ENCODE measurements at regions of chr1 and their contacts with region 1.

Region 1: GRCh38 chr1:31886866-31887265 is 51.3 kb downstream of the PTP4A2 start:
- DNase-seq: peak; percentile 28 to 47 (median 33)
- H3K4me3 ChIP-seq: no peak overlapping the region
- H3K4me3 Mint-ChIP-seq: no peak overlapping the region
- H3K27ac ChIP-seq: no peak overlapping the region
- H3K27ac Mint-ChIP-seq: peak overlapping the region in 4 of 7 donors; percentile 9 to 58 (median 25)
- H3K4me1 ChIP-seq: peaks cover 43 to 47% of the 10 kb centered on the region in 2 donors
- H3K4me1 Mint-ChIP-seq: peaks cover 36% of the 10 kb centered on the region
- H3K27me3 ChIP-seq: no peaks in the 10 kb centered on the region
- H3K27me3 Mint-ChIP-seq: peaks cover 0 to 2% (median 0%) of the 10 kb centered on the region in 3 donors
- CTCF ChIP-seq: no peak

Region 2: GRCh38 chr1:31831397-31832378 is 55.2 kb before region 1 on chr1:
- intact Hi-C with region 1: no loop called
- DNase-seq: no peak
- H3K4me3 ChIP-seq: no peak overlapping the region
- H3K4me3 Mint-ChIP-seq: no peak overlapping the region
- H3K27ac ChIP-seq: no peak overlapping the region
- H3K27ac Mint-ChIP-seq: no peak overlapping the region
- H3K4me1 ChIP-seq: peaks cover 13 to 19% of the 10 kb centered on the region in 2 donors
- H3K4me1 Mint-ChIP-seq: peaks cover 21% of the 10 kb centered on the region
- H3K27me3 ChIP-seq: no peaks in the 10 kb centered on the region
- H3K27me3 Mint-ChIP-seq: peaks cover 6 to 11% (median 8%) of the 10 kb centered on the region in 3 donors
- CTCF ChIP-seq: no peak

Region 3: DNA sequence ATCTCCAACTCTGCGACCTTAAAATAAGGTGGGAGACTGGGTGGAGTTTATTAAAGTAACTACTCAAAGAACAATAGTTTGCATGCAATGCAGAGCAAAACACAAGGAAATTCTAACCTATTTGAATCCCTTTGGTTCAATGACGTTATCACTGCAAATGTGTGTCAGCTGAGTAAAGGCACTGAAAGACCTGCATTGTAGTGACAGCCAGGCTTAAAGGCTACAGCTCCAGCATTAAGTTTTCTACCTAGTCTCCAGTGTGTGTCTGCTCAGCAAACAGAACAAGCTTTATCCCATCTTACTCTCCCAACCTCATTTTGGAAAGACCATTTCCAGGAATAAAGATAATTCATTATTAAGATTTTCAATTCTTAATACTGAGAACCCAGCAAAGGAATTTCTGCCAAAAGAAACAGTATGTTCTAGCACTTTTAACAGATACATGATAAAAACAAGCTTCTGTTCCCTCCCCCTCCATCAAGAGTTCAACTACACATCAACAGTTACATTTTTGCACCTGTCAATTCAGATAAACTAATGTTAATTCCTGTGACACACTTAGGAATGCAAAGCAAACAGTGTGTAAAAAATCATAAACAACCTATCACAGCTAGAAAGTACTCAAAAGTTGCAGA is 37.2 kb after region 1 on chr1:
- intact Hi-C with region 1: loop called in 1 of 2 experiments (anchors 5 kb)
- DNase-seq: no peak
- H3K4me3 ChIP-seq: no peak overlapping the region
- H3K4me3 Mint-ChIP-seq: no peak overlapping the region
- H3K27ac ChIP-seq: peak overlapping the region in 1 of 2 donors; percentile 47
- H3K27ac Mint-ChIP-seq: peak overlapping the region in 6 of 7 donors; percentile 45 to 81 (median 72)
- H3K4me1 ChIP-seq: peaks cover 76 to 89% of the 10 kb centered on the region in 2 donors
- H3K4me1 Mint-ChIP-seq: peaks cover 84% of the 10 kb centered on the region
- H3K27me3 ChIP-seq: no peaks in the 10 kb centered on the region
- H3K27me3 Mint-ChIP-seq: no peaks in the 10 kb centered on the region
- CTCF ChIP-seq: no peak